OCI-LY7 (cell line): ENCODE measurements at regions of chr5 and their contacts with region 1.

Region 1: DNA sequence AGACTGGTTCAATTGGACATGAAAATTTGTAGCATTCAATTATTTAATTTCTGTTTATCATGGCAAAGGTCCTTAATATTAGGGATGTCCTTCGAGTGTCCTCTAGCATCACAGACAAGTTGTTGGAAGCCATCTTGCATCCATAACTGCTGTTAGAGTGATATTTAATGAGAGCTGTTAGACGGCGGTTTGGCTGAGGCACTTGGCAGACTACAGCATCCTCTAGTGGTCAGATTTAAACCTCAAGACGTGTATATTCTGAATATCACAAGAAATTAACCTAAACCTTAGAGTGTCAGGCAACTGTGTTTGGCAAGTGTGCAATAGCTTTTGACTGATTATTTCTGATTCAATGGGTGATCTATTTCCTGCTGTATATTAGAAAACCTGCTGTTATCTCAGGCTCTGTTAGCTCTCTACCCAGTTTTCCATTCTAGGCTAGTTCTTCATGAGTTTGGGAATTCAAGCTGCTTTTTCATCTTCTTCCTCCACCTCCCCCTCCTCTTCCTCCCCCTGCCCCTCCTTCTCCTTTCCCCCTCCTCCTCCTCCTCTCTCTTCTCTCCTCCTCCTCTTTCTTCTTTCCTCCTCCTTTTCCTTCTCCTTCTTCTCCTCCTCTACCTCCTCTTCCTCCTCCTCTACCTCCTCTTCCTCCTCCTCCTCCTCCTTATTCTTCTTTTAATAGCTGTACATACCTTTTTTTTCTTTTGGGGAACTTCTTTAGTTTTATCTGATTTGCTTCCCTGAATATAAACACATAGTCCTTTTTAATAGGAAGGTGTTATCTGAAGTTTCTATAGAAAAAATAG is 8.6 kb downstream of the SPINK1 start:
- DNase-seq: peak; percentile 77
- H3K4me3 ChIP-seq: no peak overlapping the region
- H3K27ac ChIP-seq: no peak overlapping the region
- H3K4me1 ChIP-seq: no peaks in the 10 kb centered on the region
- CTCF ChIP-seq: peak; percentile 98

Region 2: DNA sequence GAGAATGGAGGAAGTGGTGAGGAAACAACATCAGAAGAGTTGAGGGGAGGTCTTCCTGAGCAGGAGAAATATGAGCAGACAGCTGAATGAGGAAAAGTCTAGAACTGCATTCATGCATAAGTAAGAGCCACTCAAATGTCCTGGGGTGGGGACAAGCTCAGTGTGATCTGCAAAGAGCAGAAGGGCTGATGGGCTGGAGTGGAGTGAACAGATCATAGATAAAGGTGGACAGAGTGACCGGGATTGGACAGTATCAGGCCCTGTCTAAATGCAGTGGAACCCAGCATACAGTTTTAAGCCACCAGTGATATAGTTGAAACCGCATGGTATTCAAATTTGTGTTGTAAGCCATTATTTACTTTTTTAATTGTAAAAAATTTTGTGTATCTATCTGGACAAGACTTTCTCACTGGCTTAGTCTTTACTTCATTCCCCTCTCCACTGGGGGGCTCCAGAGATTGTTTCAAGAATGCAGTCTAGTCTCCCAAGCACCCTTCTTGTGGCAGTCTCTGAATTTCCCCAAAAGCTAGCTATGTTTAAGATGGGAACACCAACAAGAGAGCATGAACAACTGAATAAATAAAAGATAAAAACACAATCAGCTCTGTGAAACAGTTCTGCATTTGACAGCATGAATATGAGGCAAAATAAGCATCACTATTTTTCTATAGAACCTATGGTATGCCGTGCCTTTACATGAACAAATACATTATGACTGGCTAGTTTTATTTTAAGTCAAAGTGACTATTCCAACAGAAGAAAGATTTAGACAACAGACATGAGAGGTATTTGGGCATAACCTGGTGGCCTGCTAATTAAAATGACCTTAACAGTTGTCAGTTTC is 598.7 kb before region 1 on chr5:
- CTCF ChIA-PET with region 1: no interaction called
- POLR2A ChIA-PET with region 1: no interaction called
- intact Hi-C with region 1: loop called (anchors 10 kb)
- DNase-seq: peak; percentile 3
- H3K4me3 ChIP-seq: no peak overlapping the region
- H3K27ac ChIP-seq: no peak overlapping the region
- H3K4me1 ChIP-seq: no peaks in the 10 kb centered on the region
- CTCF ChIP-seq: peak; percentile 71

Region 3: DNA sequence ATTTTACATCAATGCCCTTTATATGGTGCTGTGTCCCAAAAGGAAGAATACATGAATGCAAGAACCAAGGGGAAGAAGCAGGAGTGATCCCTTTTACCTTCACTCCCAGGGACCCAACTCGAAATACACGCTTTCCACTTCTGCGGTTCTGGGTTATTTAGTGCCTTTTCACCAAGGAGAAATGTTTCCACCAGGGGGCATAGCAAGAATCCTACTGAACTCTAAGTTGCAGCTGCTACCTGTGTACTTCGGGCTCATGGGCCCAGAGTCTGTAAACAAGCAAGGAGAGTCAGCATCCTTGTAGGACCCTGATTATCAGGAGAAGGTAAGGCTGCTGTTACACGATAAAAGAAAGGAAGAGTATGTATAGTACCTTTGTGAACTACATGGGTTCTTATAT is 358.7 kb before region 1 on chr5:
- CTCF ChIA-PET with region 1: no interaction called
- POLR2A ChIA-PET with region 1: no interaction called
- intact Hi-C with region 1: loop called (anchors 1 kb)
- DNase-seq: peak; percentile 20
- H3K4me3 ChIP-seq: no peak overlapping the region
- H3K27ac ChIP-seq: no peak overlapping the region
- H3K4me1 ChIP-seq: no peaks in the 10 kb centered on the region
- CTCF ChIP-seq: peak; percentile 70

Region 4: GRCh38 chr5:147547730-147548129 is 275.2 kb before region 1 on chr5:
- CTCF ChIA-PET with region 1: no interaction called
- POLR2A ChIA-PET with region 1: no interaction called
- intact Hi-C with region 1: no loop called
- DNase-seq: no peak
- H3K4me3 ChIP-seq: no peak overlapping the region
- H3K27ac ChIP-seq: no peak overlapping the region
- H3K4me1 ChIP-seq: no peaks in the 10 kb centered on the region
- CTCF ChIP-seq: no peak

Region 5: GRCh38 chr5:147628058-147628895 is 194.6 kb before region 1 on chr5:
- CTCF ChIA-PET with region 1: interaction called, 4 read pairs
- POLR2A ChIA-PET with region 1: interaction called, 10 read pairs
- intact Hi-C with region 1: loop called (anchors 1 kb)
- DNase-seq: peak; percentile 71
- H3K4me3 ChIP-seq: no peak overlapping the region
- H3K27ac ChIP-seq: no peak overlapping the region
- H3K4me1 ChIP-seq: no peaks in the 10 kb centered on the region
- CTCF ChIP-seq: peak; percentile 91